ENCODE measurements at regions of chr7 and their contacts with region 1.

Region 1: GRCh38 chr7:27662490-27663205 is at the start of gene HIBADH:
- DNase-seq: peak; percentile 98 to 99
- ATAC-seq: peak; percentile 98 to 99 (median 99)
- H3K4me3 ChIP-seq: peak within 1 kb of the TSS; percentile 72 to 99 (median 88)
- H3K27ac ChIP-seq: peak within 1 kb of the TSS; percentile 84 to 97 (median 93)
- H3K4me1 ChIP-seq: peaks cover 0 to 22% (median 15%) of the 10 kb centered on the region in 9 donors
- H3K27me3 ChIP-seq: no peaks in the 10 kb centered on the region
- CTCF ChIP-seq: peak in 7 of 9 donors; percentile 19 to 41 (median 34)
- total RNA-seq, gene HIBADH: 56.5 to 94.0 (median 80.8) TPM

Region 2: GRCh38 chr7:27647052-27647451 is 15.6 kb before region 1 on chr7:
- intact Hi-C with region 1: loop called in 1 of 10 experiments (anchors 2 kb)
- DNase-seq: no peak
- ATAC-seq: no peak
- H3K4me3 ChIP-seq: no peak overlapping the region
- H3K27ac ChIP-seq: no peak overlapping the region
- H3K4me1 ChIP-seq: peaks cover 0 to 2% (median under 1%) of the 10 kb centered on the region in 9 donors
- H3K27me3 ChIP-seq: no peaks in the 10 kb centered on the region
- CTCF ChIP-seq: no peak

Region 3: GRCh38 chr7:27730112-27730511 is 67.5 kb after region 1 on chr7:
- intact Hi-C with region 1: loop called in 2 of 10 experiments (anchors 5 kb)
- DNase-seq: no peak
- ATAC-seq: no peak
- H3K4me3 ChIP-seq: no peak overlapping the region
- H3K27ac ChIP-seq: no peak overlapping the region
- H3K4me1 ChIP-seq: no peaks in the 10 kb centered on the region
- H3K27me3 ChIP-seq: no peaks in the 10 kb centered on the region
- CTCF ChIP-seq: no peak

Region 4: GRCh38 chr7:27739909-27740448 is 77.3 kb after region 1 on chr7 and contains the start of gene TAX1BP1:
- intact Hi-C with region 1: loop called in 5 of 10 experiments (anchors 1 to 5 kb)
- DNase-seq: peak; percentile 97
- ATAC-seq: peak; percentile 100
- H3K4me3 ChIP-seq: peak within 1 kb of the TSS; percentile 70 to 94 (median 89)
- H3K27ac ChIP-seq: peak within 1 kb of the TSS; percentile 89 to 99 (median 96)
- H3K4me1 ChIP-seq: peaks cover 6 to 43% (median 27%) of the 10 kb centered on the region in 9 donors
- H3K27me3 ChIP-seq: no peaks in the 10 kb centered on the region
- CTCF ChIP-seq: no peak
- total RNA-seq, gene TAX1BP1: 153 to 190 (median 169) TPM

Measured in heart right ventricle (tissue), 16 donors.